PC-9 (cell line): ENCODE measurements at regions of chrX and their contacts with region 1.

Region 1: GRCh38 chrX:19410259-19410658 is 66.5 kb downstream of the PDHA1 start:
- DNase-seq: no peak
- H3K4me3 ChIP-seq: no peak overlapping the region
- H3K27ac ChIP-seq: no peak overlapping the region
- H3K4me1 ChIP-seq: no peaks in the 10 kb centered on the region
- H3K27me3 ChIP-seq: peaks cover 6% of the 10 kb centered on the region; the same call in 1 of the 2 replicates
- CTCF ChIP-seq: no peak

Region 2: GRCh38 chrX:19479458-19479857 is 69.2 kb after region 1 on chrX:
- CTCF ChIA-PET with region 1: no interaction called
- POLR2A ChIA-PET with region 1: no interaction called
- intact Hi-C with region 1: loop called (anchors 10 kb)
- DNase-seq: no peak
- H3K4me3 ChIP-seq: no peak overlapping the region
- H3K27ac ChIP-seq: no peak overlapping the region
- H3K4me1 ChIP-seq: no peaks in the 10 kb centered on the region
- H3K27me3 ChIP-seq: no peaks in the 10 kb centered on the region; the same call in 1 of the 2 replicates
- CTCF ChIP-seq: no peak

Region 3: DNA sequence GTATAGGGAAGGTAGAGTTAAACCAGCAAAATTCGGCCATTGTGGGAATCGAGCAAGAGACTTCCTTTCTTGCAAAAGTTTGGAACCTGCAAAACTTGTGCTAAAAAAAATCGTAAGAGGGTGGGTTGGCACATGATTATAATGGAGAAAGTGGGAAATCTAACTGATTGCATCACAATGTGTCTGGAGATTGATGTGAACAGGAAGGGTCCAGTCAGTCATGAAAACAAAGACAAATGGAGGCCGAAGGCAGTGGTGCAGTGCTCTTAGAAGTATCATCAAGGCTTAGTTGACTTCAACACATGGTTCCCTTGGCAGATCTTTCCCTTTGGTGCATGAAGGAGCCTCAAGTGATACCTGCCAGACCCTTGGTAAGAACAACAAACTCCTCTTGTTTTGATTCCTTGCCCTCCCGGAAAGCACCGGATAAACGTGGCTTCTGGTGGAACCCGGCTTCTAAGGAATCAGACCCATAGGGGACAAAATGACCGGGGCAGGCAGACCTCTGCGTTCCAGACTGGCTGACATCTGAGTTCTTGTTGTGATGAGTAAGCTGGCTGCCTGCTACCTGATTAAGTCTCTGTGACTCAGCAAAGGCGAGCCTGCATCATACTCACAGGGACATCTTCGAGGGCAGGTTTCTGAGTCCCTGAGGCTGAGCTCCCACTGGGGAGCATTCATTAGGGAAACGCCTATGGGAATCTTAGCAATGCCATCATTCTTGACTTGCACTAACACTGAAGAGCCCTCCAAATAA is 192.8 kb after region 1 on chrX:
- CTCF ChIA-PET with region 1: no interaction called
- POLR2A ChIA-PET with region 1: no interaction called
- intact Hi-C with region 1: no loop called
- DNase-seq: peak; percentile 63 to 83
- H3K4me3 ChIP-seq: no peak overlapping the region
- H3K27ac ChIP-seq: peak overlapping the region; percentile 69
- H3K4me1 ChIP-seq: peaks cover 11% of the 10 kb centered on the region
- H3K27me3 ChIP-seq: no peaks in the 10 kb centered on the region
- CTCF ChIP-seq: no peak

Region 4: GRCh38 chrX:19887911-19888879 is 477.9 kb after region 1 on chrX:
- CTCF ChIA-PET with region 1: no interaction called
- POLR2A ChIA-PET with region 1: no interaction called
- intact Hi-C with region 1: no loop called
- DNase-seq: peak; percentile 53 to 70
- H3K4me3 ChIP-seq: peak overlapping the region; percentile 65
- H3K27ac ChIP-seq: peak overlapping the region; percentile 77
- H3K4me1 ChIP-seq: peaks cover 33% of the 10 kb centered on the region
- H3K27me3 ChIP-seq: no peaks in the 10 kb centered on the region
- CTCF ChIP-seq: peak; percentile 60